H1 (cell line): ENCODE measurements at regions of chr16 and their contacts with region 1.

Region 1: GRCh38 chr16:62036101-62036801 is at the start of gene CDH8:
- DNase-seq: peak in 1 of 2 experiments; percentile 82
- H3K4me3 ChIP-seq: peak within 1 kb of the TSS; percentile 47 to 78 (median 62)
- H3K27ac ChIP-seq: no peak within 1 kb of the TSS
- H3K4me1 ChIP-seq: peaks cover 3 to 21% (median 11%) of the 10 kb centered on the region in 4 experiments
- H3K27me3 ChIP-seq: peaks cover 6 to 50% (median 41%) of the 10 kb centered on the region in 4 experiments
- CTCF ChIP-seq: no peak
- EP300 ChIP-seq: no peak
- POLR2A ChIP-seq: no peak
- RAD21 ChIP-seq: peak in 1 of 2 experiments; percentile 1; a peak in 1 of 4 replicates
- total RNA-seq, gene CDH8: 8.3 and 8.4 TPM in 2 replicates

Region 2: DNA sequence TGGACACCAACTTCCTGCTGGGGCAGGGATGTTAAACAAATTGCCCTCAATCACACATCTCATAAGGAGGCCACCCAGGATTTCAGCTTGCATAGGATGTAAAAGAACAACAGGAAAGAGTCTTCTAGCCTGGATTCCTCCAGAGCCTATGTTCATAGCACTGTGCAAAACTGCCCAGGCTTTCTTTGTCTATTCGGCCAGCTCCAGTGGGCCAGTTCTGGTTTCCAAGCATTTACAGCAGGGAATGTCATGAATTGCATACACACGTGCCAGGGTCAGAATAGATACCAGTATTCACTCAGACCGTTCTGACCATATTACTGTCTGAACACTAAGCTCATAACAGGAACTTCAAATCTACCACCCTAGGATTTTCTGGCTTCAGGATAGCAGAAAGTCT is 273.2 kb before region 1 on chr16:
- CTCF ChIA-PET with region 1: no interaction called
- POLR2A ChIA-PET with region 1: no interaction called
- DNase-seq: no peak
- H3K4me3 ChIP-seq: no peak overlapping the region
- H3K27ac ChIP-seq: no peak overlapping the region
- H3K4me1 ChIP-seq: no peaks in the 10 kb centered on the region
- H3K27me3 ChIP-seq: no peaks in the 10 kb centered on the region
- CTCF ChIP-seq: no peak
- EP300 ChIP-seq: no peak
- POLR2A ChIP-seq: no peak
- RAD21 ChIP-seq: no peak

Region 3: DNA sequence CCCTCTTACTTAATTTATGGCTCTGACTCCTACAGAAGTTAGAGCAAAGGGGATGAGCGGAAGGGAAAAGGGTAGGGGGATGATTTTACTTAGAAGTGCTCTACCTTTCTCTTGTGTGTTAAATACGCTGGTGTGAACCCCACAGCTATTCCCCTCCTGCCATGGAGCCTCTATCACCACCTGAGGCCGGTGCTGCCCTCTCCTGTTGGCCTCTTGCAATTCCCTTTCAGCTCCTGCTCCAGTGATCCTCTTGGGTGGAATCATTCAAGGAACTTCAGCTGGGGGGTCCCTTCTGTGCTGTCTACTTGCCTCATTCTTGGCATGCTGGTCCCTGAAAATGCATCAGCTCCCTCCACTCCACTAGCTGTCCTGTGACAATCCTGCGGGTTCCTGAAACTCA is 41.7 kb after region 1 on chr16:
- CTCF ChIA-PET with region 1: interaction called, 15 read pairs
- POLR2A ChIA-PET with region 1: no interaction called
- DNase-seq: peak; percentile 49 to 72
- H3K4me3 ChIP-seq: no peak overlapping the region
- H3K27ac ChIP-seq: no peak overlapping the region
- H3K4me1 ChIP-seq: no peaks in the 10 kb centered on the region
- H3K27me3 ChIP-seq: no peaks in the 10 kb centered on the region
- CTCF ChIP-seq: peak; percentile 86 to 93 (median 91)
- EP300 ChIP-seq: no peak
- POLR2A ChIP-seq: no peak
- RAD21 ChIP-seq: peak; percentile 92 to 93

Region 4: GRCh38 chr16:62102588-62102987 is 66.3 kb after region 1 on chr16:
- CTCF ChIA-PET with region 1: no interaction called
- POLR2A ChIA-PET with region 1: no interaction called
- DNase-seq: no peak
- H3K4me3 ChIP-seq: no peak overlapping the region
- H3K27ac ChIP-seq: no peak overlapping the region
- H3K4me1 ChIP-seq: peaks cover 0 to 7% (median 1%) of the 10 kb centered on the region in 4 experiments; a peak in 2 of 7 replicates
- H3K27me3 ChIP-seq: no peaks in the 10 kb centered on the region
- CTCF ChIP-seq: no peak
- EP300 ChIP-seq: no peak
- POLR2A ChIP-seq: no peak
- RAD21 ChIP-seq: no peak

Region 5: DNA sequence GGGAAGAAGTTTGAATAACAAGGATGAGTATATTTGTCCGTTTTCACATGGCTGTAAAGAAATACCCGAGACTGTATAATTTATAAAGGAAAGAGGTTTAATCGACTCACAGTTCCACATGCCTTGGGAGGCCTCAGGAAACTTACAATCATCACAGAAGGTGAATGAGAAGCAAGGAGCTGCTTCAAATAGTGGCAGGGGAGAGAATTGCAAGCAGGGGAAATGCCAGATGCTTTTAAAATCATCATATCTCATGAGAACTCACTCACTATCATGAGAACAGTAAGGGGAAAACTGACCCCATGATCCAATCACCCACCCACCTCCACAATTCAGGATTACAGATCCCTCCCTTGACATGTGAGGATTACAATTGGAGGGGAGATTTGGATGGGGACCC is 212.8 kb after region 1 on chr16:
- CTCF ChIA-PET with region 1: no interaction called
- POLR2A ChIA-PET with region 1: no interaction called
- DNase-seq: no peak
- H3K4me3 ChIP-seq: no peak overlapping the region
- H3K27ac ChIP-seq: no peak overlapping the region
- H3K4me1 ChIP-seq: peaks cover 0 to 4% (median under 1%) of the 10 kb centered on the region in 4 experiments; a peak in 1 of 7 replicates
- H3K27me3 ChIP-seq: no peaks in the 10 kb centered on the region
- CTCF ChIP-seq: peak in 1 of 3 experiments; percentile 34; a peak in 2 of 4 replicates
- EP300 ChIP-seq: no peak
- POLR2A ChIP-seq: no peak
- RAD21 ChIP-seq: peak in 1 of 2 experiments; percentile 13; a peak in 1 of 4 replicates